MCF 10A (cell line): ENCODE measurements at regions of chr20 and their contacts with region 1.

Region 1: DNA sequence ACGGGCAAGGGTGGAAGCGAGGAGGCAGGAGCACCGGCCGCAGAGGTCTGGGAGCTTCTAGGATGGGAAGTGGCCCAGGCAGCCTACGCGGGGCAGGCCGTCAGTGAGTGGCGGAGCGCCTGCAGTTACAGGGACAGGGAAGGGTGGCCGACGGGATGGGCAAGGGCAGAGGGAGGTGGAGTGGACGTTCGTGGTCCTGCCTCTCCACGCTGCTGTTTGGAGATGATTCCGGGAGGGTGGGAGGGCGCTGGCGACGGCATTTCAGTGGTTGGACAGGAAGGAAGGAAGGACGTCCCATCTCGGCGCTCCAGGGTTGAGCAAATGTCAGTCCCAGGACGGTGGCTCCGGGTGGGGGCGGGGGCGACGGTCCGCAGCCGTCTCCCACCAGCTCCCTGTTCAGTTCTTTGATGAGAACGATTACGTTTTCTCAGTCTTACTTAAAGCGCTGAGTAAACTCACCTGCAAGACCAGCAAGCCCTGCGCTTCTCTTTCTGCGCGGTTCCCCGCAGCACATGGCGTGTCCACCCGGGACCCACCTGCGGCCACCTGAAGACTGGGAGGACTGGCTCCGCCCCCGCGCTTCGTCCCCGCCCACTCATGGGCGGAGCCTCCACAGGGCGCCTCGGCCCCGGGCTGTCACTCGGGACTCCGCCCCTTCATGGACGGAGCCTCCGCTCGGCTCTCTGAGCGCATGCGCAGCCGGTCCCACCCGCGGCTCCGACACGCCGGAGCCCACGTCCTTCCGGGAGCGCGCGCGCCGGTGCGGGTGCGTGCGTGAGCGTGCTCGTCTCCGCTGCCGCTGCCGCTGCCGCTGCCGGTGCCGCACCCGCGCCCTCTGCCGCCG is at the start of gene DNAJC5:
- DNase-seq: peak; percentile 93
- H3K4me3 Mint-ChIP-seq: peak within 1 kb of the TSS; percentile 66
- H3K27ac Mint-ChIP-seq: peak within 1 kb of the TSS; percentile 88
- H3K4me1 Mint-ChIP-seq: peaks cover 29% of the 10 kb centered on the region
- H3K27me3 Mint-ChIP-seq: no peaks in the 10 kb centered on the region
- CTCF ChIP-seq: no peak
- total RNA-seq, gene DNAJC5: 38.1 and 45.0 TPM in 2 replicates

Region 2: DNA sequence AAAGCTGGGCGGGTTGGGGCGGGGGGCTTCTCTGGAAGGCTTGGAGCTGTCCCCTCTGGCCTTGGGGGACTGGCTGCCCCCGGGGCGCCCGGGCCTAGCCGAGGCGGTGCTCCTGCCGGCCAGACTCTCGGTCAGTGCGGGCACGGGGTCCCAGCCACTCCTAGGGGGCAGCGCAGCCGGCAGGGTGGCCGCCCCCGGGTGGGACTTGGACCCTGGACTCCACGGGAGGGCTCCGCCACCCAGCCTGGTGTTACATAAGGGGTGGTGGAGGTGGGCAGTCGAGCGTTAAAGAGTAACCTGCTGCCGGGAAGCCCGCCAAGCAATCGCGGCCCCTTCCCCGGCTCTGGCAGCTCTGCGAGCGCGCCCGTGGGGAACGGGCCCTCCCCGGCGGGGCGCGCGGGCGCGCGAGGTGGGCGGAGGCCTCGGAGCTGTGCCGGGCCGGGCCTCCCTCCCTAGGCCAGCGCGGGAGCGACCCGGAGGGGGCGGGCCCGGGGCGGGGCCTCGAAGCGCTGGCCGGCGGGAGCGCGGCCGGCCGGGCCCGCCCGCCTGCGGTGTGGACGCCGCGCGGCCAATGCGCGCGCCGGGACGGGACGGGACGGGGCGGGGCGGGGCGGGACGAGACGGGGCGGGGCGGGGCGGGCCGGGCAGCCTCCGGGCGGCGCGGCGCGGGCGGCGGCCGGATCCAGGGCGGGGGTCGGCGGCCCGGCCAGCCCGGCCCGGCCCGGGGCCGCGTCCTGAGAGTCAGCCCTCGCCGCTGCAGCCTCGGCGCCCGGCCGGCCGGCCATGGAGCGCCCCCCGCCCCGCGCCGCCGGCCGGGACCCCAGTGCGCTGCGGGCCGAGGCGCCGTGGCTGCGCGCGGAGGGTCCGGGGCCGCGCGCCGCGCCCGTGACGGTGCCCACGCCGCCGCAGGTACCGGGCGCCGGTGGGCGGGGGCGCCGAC is 155.2 kb before region 1 on chr20 and contains the start of gene SLC2A4RG:
- CTCF ChIA-PET with region 1: no interaction called
- POLR2A ChIA-PET with region 1: interaction called, 33 read pairs
- intact Hi-C with region 1: no loop called
- DNase-seq: peak; percentile 76
- H3K4me3 Mint-ChIP-seq: peak within 1 kb of the TSS; percentile 74
- H3K27ac Mint-ChIP-seq: no peak within 1 kb of the TSS
- H3K4me1 Mint-ChIP-seq: no peaks in the 10 kb centered on the region
- H3K27me3 Mint-ChIP-seq: no peaks in the 10 kb centered on the region
- CTCF ChIP-seq: no peak
- total RNA-seq, gene SLC2A4RG: 85.0 and 105 TPM in 2 replicates

Region 3: DNA sequence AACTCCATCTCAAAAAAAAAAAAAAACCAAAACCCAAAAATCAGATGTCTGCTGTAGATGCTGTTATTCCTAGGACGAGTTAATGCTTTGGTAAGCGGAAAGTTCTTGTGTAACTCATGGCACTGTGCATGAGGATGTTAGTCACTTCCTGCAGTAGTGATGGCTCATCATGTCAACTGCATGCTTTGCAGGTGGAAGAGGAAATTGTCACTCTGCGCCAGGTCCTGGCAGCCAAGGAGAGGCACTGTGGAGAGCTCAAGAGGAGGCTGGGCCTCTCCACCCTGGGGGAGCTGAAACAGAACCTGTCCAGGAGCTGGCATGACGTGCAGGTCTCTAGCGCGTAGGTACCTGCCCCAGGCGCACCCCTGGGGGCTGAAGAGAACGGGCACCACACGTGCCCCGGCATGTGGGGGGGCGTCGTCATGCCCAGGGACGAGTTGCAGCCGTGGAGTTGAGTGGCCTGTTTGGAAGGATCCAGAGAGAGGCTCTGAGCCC is 21.1 kb before region 1 on chr20:
- CTCF ChIA-PET with region 1: interaction called, 3 read pairs
- POLR2A ChIA-PET with region 1: interaction called, 45 read pairs
- intact Hi-C with region 1: loop called (anchors 2 kb)
- DNase-seq: peak; percentile 95
- H3K4me3 Mint-ChIP-seq: peak overlapping the region; percentile 19
- H3K27ac Mint-ChIP-seq: peak overlapping the region; percentile 73
- H3K4me1 Mint-ChIP-seq: peaks cover 6% of the 10 kb centered on the region
- H3K27me3 Mint-ChIP-seq: no peaks in the 10 kb centered on the region
- CTCF ChIP-seq: no peak

Region 4: GRCh38 chr20:63911176-63911575 is 16.6 kb after region 1 on chr20:
- CTCF ChIA-PET with region 1: interaction called, 6 read pairs
- POLR2A ChIA-PET with region 1: interaction called, 22 read pairs
- intact Hi-C with region 1: no loop called
- DNase-seq: peak; percentile 56
- H3K4me3 Mint-ChIP-seq: peak overlapping the region; percentile 28
- H3K27ac Mint-ChIP-seq: peak overlapping the region; percentile 78
- H3K4me1 Mint-ChIP-seq: peaks cover 28% of the 10 kb centered on the region
- H3K27me3 Mint-ChIP-seq: no peaks in the 10 kb centered on the region
- CTCF ChIP-seq: no peak

Region 5: DNA sequence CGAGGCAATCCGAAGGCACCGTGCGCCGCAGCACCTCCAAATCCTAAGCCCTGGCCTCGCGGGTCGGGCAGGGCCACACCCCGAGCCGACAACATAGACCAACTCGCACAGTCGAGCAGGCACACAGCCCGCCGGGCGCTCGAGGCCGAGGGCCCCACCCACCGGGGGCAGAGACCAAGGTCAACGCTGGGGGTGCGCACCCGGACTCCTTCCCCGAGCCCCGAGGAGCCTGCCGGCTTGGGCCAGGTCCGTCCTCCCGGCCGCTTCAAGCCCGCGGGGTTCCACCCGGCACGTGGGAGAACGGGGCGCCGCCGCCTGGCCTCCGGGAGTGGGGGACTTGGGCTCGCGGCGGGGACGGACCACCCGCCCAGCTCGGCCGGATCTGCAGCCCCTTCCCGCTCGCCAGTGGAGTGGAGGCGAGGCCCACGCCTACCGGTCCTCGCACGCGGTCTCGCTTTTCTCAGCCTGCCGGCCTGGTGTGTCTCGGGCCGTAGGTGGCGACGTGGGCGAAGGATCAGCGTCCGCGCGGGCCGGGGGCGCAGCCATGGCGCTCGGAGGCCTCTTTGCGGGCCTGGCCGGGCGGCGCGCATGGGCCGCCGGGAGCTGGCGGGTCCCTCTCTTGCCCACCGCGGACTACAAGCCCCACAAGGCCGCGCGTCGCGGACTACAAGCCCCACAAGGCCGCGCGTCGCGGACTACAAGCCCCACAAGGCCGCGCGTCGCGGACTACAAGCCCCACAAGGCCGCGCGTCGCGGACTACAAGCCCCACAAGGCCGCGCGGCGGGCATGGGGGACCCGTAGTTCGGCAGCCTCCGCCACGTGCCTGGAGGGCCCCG is 61.5 kb after region 1 on chr20 and contains the start of gene UCKL1:
- CTCF ChIA-PET with region 1: no interaction called
- POLR2A ChIA-PET with region 1: interaction called, 16 read pairs
- intact Hi-C with region 1: no loop called
- DNase-seq: peak; percentile 81
- H3K4me3 Mint-ChIP-seq: peak within 1 kb of the TSS; percentile 74
- H3K27ac Mint-ChIP-seq: no peak within 1 kb of the TSS
- H3K4me1 Mint-ChIP-seq: peaks cover 21% of the 10 kb centered on the region
- H3K27me3 Mint-ChIP-seq: no peaks in the 10 kb centered on the region
- CTCF ChIP-seq: no peak
- total RNA-seq, gene UCKL1: 38.6 and 43.7 TPM in 2 replicates